Activated B cell treated with CpG ODN at 0.5 μM for 24 hours (primary cell): ENCODE measurements at regions of chr11 and their contacts with region 1.

Region 1: GRCh38 chr11:11871991-11872401 is 30.2 kb downstream of the USP47 start:
- DNase-seq: no peak
- ATAC-seq: peak; percentile 21
- H3K4me3 Mint-ChIP-seq: peak overlapping the region; percentile 6
- H3K27ac Mint-ChIP-seq: peak overlapping the region; percentile 39
- H3K4me1 Mint-ChIP-seq: peaks cover 50% of the 10 kb centered on the region
- H3K27me3 Mint-ChIP-seq: no peaks in the 10 kb centered on the region
- CTCF ChIP-seq: no peak

Region 2: GRCh38 chr11:11202885-11203284 is 669.1 kb before region 1 on chr11:
- CTCF ChIA-PET with region 1: no interaction called
- POLR2A ChIA-PET with region 1: no interaction called
- intact Hi-C with region 1: no loop called
- DNase-seq: no peak
- ATAC-seq: no peak
- H3K4me3 Mint-ChIP-seq: no peak overlapping the region
- H3K27ac Mint-ChIP-seq: no peak overlapping the region
- H3K4me1 Mint-ChIP-seq: no peaks in the 10 kb centered on the region
- H3K27me3 Mint-ChIP-seq: peaks cover 18% of the 10 kb centered on the region
- CTCF ChIP-seq: no peak

Region 3: GRCh38 chr11:11860103-11860979 is 11.7 kb before region 1 on chr11:
- CTCF ChIA-PET with region 1: no interaction called
- POLR2A ChIA-PET with region 1: no interaction called
- intact Hi-C with region 1: loop called (anchors 1 kb)
- DNase-seq: no peak
- ATAC-seq: no peak
- H3K4me3 Mint-ChIP-seq: no peak overlapping the region
- H3K27ac Mint-ChIP-seq: no peak overlapping the region
- H3K4me1 Mint-ChIP-seq: peaks cover 57% of the 10 kb centered on the region
- H3K27me3 Mint-ChIP-seq: no peaks in the 10 kb centered on the region
- CTCF ChIP-seq: no peak

Region 4: DNA sequence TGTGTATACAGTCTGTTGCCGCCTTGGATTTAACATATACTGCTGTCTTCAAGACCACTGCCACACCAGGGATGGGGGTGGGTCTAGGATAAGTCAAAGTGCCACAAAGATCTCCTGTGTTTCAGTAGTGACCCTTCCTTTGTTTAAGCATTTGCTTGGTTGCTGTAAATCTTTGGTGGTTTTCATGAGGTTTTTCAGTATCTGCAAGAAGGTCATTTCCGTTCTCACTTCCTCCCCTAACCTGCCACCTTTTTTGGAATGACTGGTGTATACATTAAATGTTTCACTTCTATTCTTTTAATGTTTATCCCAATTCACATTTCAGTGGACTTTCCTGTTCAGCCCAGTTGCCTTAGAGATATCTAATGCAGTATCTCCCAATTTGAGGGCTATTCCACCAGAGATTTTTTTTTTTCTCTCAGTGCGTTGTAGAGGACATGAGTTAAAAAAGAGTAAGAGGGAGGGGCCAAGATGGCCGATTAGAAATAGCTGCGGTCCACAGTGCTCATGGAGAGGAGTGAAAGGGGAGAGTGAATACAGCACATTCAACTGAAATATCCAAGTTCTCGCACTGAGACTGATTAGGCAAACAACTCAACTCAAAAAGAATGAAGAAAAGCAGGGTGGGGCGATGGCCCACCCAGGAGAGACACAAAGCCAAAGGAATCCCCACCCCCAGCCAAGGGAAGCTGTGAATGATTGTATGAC is 12.9 kb after region 1 on chr11:
- CTCF ChIA-PET with region 1: no interaction called
- POLR2A ChIA-PET with region 1: no interaction called
- intact Hi-C with region 1: loop called (anchors 2 kb)
- DNase-seq: no peak
- ATAC-seq: peak; percentile 50
- H3K4me3 Mint-ChIP-seq: no peak overlapping the region
- H3K27ac Mint-ChIP-seq: peak overlapping the region; percentile 67
- H3K4me1 Mint-ChIP-seq: peaks cover 18% of the 10 kb centered on the region
- H3K27me3 Mint-ChIP-seq: no peaks in the 10 kb centered on the region
- CTCF ChIP-seq: no peak

Region 5: DNA sequence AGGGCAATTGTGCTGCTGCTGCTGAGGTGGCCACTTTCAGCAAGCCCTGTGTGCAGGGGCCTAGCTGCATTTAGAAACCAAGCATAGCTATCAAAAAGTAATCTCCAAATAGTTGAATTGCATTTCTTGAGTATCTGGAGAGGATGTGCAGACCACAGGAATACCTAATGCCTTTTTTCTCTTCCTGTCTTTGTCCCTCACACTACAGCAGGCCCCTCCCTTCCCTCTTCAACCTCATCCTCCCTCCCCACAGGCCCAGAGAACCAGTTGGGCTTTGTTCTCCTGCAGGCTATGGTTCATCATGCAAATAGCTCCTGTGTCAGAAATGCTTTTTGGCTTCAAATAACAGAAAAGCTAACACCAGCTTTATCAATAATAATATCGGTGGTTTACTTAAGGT is 88.7 kb after region 1 on chr11:
- CTCF ChIA-PET with region 1: no interaction called
- POLR2A ChIA-PET with region 1: no interaction called
- intact Hi-C with region 1: no loop called
- DNase-seq: no peak
- ATAC-seq: no peak
- H3K4me3 Mint-ChIP-seq: no peak overlapping the region
- H3K27ac Mint-ChIP-seq: no peak overlapping the region
- H3K4me1 Mint-ChIP-seq: peaks cover 7% of the 10 kb centered on the region
- H3K27me3 Mint-ChIP-seq: peaks cover 5% of the 10 kb centered on the region
- CTCF ChIP-seq: no peak

Region 6: DNA sequence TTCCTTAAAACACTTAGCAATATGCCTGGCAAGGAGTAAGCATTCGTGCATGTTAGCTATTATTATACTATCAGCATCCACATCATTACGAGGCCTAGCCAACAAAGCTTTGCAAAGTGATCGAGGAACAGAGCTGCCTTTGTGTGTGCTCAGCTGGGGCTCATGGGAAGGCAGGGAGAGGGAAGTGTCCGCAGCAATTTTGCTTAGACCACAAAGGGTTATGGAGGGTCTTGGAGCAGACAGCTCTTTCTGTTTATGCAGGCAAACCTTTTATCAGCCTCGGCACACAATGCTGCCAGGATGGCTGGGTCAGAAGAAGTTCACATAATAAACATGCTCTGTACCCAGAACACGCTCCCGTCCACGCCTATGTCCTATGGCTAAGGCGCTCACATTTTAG is 147.3 kb after region 1 on chr11:
- CTCF ChIA-PET with region 1: no interaction called
- POLR2A ChIA-PET with region 1: no interaction called
- intact Hi-C with region 1: no loop called
- DNase-seq: no peak
- ATAC-seq: no peak
- H3K4me3 Mint-ChIP-seq: no peak overlapping the region
- H3K27ac Mint-ChIP-seq: no peak overlapping the region
- H3K4me1 Mint-ChIP-seq: no peaks in the 10 kb centered on the region
- H3K27me3 Mint-ChIP-seq: peaks cover 39% of the 10 kb centered on the region
- CTCF ChIP-seq: no peak